ENCODE measurements at regions of chr20 and their contacts with region 1.

Region 1: DNA sequence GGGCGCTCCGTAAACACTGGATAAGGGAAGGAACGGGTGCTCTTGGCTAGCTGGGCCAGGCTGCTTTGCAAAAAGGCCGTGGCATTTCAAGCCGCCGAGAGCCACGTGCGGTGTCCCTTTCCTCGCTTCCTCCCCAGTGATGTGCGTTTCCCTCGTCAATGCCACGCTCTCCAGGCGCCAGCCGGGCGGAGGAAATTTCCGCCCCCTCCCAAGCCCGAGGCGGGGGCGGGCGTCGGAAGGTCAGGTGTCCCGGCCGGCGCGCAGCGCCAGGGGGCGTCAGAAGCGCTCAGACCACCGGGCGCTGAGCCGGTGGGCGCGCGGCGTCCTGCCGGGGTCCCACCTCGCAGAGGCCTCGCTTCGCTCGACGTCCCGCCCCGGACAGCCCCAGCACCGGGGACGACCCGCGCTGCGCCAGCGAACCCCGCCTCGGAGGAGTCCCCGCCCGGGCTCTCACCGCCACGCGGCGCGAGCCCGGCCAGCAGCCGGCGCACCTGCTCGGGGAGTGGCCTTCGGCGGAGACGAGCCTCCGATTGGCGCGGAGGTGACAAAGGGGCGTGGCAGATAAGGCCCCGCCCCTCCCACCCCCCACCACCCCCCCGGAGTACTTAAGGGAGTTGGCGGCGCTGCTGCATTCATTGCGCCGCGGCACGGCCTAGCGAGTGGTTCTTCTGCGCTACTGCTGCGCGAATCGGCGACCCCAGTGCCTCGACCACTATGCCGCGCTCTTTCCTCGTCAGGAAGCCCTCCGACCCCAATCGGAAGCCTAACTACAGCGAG is at the start of gene SNAI1:
- H3K4me3 ChIP-seq: peak within 1 kb of the TSS; percentile 35
- H3K27ac ChIP-seq: no peak within 1 kb of the TSS; the same call in 1 of the 2 replicates
- H3K4me1 ChIP-seq: peaks cover 2% of the 10 kb centered on the region; the same call in 1 of the 2 replicates
- CTCF ChIP-seq: peak; percentile 67

Region 2: GRCh38 chr20:49955167-49955566 is 27.4 kb before region 1 on chr20:
- CTCF ChIA-PET with region 1: no interaction called
- POLR2A ChIA-PET with region 1: no interaction called
- H3K4me3 ChIP-seq: no peak overlapping the region
- H3K27ac ChIP-seq: no peak overlapping the region
- H3K4me1 ChIP-seq: no peaks in the 10 kb centered on the region
- CTCF ChIP-seq: no peak

Region 3: DNA sequence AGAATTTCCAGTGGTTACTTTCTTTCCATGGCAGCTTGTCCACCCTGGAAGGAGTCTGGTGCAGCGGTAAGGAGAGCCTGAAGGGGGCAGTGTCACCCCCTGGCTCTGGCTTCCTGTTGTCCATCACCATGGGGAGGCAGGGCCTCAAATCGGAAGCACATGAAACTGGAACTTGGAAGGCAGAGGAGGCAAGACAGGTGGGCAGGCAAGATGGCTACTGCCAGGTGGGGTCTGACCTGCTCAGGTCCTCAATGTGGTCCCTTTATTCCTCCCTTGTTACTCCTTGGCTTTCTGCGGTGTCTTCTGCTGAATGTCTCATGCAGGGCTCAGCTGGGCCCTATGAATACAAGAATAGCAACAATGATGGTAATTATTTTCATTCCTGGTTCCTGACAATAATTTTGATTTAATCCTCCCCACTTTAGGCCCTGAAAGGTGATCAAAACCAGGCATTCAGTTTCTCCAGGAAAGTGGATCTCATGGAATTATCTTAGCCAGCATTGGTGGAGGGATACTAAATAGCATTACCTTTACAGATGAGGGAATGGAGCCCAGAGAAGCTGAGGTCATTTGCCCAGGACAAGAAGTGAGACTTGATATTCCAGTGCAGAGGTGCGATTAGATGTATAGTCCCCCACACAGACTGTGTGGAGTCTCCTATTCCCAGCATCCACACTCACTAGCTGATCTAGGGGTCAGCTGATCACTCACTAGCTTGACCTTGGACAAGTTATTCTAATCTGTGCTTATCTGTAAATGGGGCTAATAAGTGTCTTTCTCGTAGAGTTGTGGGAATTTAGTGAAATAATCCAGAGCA is 17.4 kb before region 1 on chr20:
- CTCF ChIA-PET with region 1: interaction called, 21 read pairs
- POLR2A ChIA-PET with region 1: no interaction called
- H3K4me3 ChIP-seq: no peak overlapping the region
- H3K27ac ChIP-seq: no peak overlapping the region
- H3K4me1 ChIP-seq: no peaks in the 10 kb centered on the region
- CTCF ChIP-seq: peak; percentile 66

Region 4: GRCh38 chr20:50037123-50037522 is 54.6 kb after region 1 on chr20:
- CTCF ChIA-PET with region 1: interaction called, 10 read pairs
- POLR2A ChIA-PET with region 1: no interaction called
- H3K4me3 ChIP-seq: no peak overlapping the region
- H3K27ac ChIP-seq: no peak overlapping the region
- H3K4me1 ChIP-seq: no peaks in the 10 kb centered on the region
- CTCF ChIP-seq: no peak

Region 5: GRCh38 chr20:50085452-50086365 is 103.2 kb after region 1 on chr20:
- CTCF ChIA-PET with region 1: interaction called, 34 read pairs
- POLR2A ChIA-PET with region 1: no interaction called
- H3K4me3 ChIP-seq: no peak overlapping the region
- H3K27ac ChIP-seq: no peak overlapping the region
- H3K4me1 ChIP-seq: peaks cover 8% of the 10 kb centered on the region
- CTCF ChIP-seq: peak; percentile 79

Region 6: GRCh38 chr20:50115591-50116372 is 133.2 kb after region 1 on chr20:
- CTCF ChIA-PET with region 1: interaction called, 10 read pairs
- POLR2A ChIA-PET with region 1: no interaction called
- H3K4me3 ChIP-seq: peak overlapping the region; percentile 59
- H3K27ac ChIP-seq: no peak overlapping the region; the same call in 1 of the 2 replicates
- H3K4me1 ChIP-seq: peaks cover 5% of the 10 kb centered on the region; the same call in 1 of the 2 replicates
- CTCF ChIP-seq: no peak

Region 7: DNA sequence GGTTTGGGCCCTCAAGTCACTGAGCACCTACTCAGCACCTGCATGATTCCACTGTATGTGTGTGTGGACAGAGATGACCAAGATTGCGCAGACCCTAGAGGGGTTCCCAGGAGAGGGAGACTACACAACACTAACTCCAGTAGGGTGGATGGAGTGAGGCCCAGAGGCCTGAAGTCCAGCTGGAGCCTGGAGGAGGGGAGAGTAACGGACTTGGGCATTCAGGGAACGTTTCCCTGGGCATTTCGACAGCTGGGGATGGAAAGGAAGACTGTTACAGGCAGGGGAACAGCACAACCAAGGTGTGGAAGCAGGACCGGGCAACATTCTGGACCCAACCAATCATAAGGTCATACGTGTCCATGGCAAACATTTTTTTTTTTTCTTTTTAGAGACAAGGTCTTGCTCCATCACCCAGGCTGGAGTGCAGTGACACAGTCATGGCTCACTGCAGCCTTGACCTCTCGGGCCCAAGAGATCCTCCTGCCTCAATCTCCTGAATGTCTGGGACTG is 197.0 kb after region 1 on chr20:
- CTCF ChIA-PET with region 1: interaction called, 34 read pairs
- POLR2A ChIA-PET with region 1: interaction called, 4 read pairs
- H3K4me3 ChIP-seq: no peak overlapping the region
- H3K27ac ChIP-seq: no peak overlapping the region
- H3K4me1 ChIP-seq: no peaks in the 10 kb centered on the region
- CTCF ChIP-seq: no peak

Measured in HEK293 (cell line).